ENCODE measurements at regions of chr2 and their contacts with region 1.

Region 1: DNA sequence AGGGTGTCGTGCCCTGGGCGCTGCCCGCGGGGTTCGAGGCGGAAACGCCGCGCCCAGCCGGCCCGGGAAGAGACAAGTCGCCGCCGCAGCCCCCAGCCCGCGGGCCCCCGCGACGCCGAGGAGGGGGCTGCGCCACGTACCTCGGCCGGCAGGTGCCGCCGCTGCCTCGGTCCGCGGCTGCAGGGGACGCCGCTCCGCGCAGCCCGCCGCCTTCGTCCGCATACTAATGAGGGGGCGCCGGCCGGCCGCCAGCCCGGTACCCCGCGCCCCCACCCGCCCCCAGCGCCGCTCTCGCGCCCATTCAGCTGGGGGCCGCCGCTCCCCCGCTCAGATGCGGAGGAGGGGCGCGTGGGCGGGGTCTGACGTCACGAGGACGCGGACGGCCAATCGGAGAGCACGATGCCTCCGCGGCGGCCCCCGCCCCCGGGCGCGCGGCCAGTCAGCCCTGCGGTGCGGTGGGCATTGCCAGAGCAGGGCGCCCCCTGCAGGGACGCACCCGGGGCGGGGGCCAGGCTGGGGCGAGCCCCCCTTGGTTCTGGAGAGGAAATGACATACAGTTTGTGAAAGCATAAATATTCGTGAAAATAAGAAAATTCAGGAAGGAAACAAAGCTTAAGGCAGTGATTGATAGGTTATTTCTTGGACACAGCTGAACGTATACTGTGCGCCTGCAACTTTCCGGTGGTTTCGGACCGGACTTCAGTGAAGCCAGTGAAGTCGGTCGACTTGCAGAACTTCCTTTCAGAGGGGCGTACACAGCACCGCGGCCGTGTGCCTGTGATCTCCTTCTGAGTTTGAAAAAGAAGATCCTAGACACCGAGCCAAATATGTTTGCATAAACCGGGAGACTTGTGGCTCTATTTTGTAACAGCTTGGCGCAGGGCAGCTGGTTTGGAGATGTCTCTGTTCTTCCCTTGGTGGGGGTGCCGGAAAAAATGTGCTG is at the start of gene ST3GAL5:
- DNase-seq: peak; percentile 91
- H3K4me3 Mint-ChIP-seq: peak within 1 kb of the TSS; percentile 90
- H3K27ac Mint-ChIP-seq: peak within 1 kb of the TSS; percentile 78
- H3K4me1 Mint-ChIP-seq: peaks cover 59% of the 10 kb centered on the region
- H3K27me3 Mint-ChIP-seq: no peaks in the 10 kb centered on the region
- total RNA-seq, gene ST3GAL5: 9.6 to 11.5 TPM

Region 2: GRCh38 chr2:85826990-85827878 is 61.7 kb before region 1 on chr2:
- CTCF ChIA-PET with region 1: interaction called, 141 read pairs
- POLR2A ChIA-PET with region 1: interaction called, 4 read pairs
- intact Hi-C with region 1: loop called (anchors 1 kb)
- DNase-seq: peak; percentile 86
- H3K4me3 Mint-ChIP-seq: no peak overlapping the region
- H3K27ac Mint-ChIP-seq: no peak overlapping the region
- H3K4me1 Mint-ChIP-seq: peaks cover 15% of the 10 kb centered on the region
- H3K27me3 Mint-ChIP-seq: peaks cover 3% of the 10 kb centered on the region

Region 3: GRCh38 chr2:85865539-85866164 is 23.3 kb before region 1 on chr2:
- CTCF ChIA-PET with region 1: interaction called, 34 read pairs
- POLR2A ChIA-PET with region 1: interaction called, 7 read pairs
- intact Hi-C with region 1: loop called (anchors 1 kb)
- DNase-seq: peak; percentile 71
- H3K4me3 Mint-ChIP-seq: no peak overlapping the region
- H3K27ac Mint-ChIP-seq: no peak overlapping the region
- H3K4me1 Mint-ChIP-seq: peaks cover 60% of the 10 kb centered on the region
- H3K27me3 Mint-ChIP-seq: no peaks in the 10 kb centered on the region

Region 4: DNA sequence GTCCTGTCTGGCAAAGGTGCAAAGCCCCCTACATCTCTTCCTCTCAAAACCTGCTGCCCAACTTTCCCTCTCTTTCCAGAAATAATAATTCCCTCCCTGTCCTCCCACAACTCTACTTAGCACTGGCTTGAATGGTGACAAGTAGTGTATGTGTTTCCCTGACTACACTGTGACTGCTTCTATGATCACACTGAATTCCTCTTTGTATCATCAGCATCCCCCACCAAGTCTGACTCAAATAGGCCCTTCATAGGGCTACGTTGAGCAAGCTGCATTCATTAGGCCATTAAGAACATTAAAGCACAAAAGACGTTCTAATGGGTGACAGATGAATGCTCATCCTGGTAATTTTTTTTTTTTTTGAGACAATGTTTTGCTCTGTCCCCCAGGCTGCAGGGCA is 13.5 kb after region 1 on chr2:
- CTCF ChIA-PET with region 1: interaction called, 19 read pairs
- POLR2A ChIA-PET with region 1: interaction called, 3 read pairs
- intact Hi-C with region 1: no loop called
- DNase-seq: no peak
- H3K4me3 Mint-ChIP-seq: no peak overlapping the region
- H3K27ac Mint-ChIP-seq: no peak overlapping the region
- H3K4me1 Mint-ChIP-seq: peaks cover 9% of the 10 kb centered on the region
- H3K27me3 Mint-ChIP-seq: no peaks in the 10 kb centered on the region

Region 5: GRCh38 chr2:86079981-86080911 is 191.3 kb after region 1 on chr2:
- CTCF ChIA-PET with region 1: interaction called, 50 read pairs
- POLR2A ChIA-PET with region 1: interaction called, 6 read pairs
- intact Hi-C with region 1: loop called (anchors 1 kb)
- DNase-seq: peak; percentile 86
- H3K4me3 Mint-ChIP-seq: no peak overlapping the region
- H3K27ac Mint-ChIP-seq: peak overlapping the region; percentile 65
- H3K4me1 Mint-ChIP-seq: peaks cover 27% of the 10 kb centered on the region
- H3K27me3 Mint-ChIP-seq: no peaks in the 10 kb centered on the region

Measured in activated CD4-positive, alpha-beta memory T cell treated with anti-CD3 and anti-CD28 coated beads for 36 hours (primary cell).